ENCODE measurements at regions of chr6 and their contacts with region 1.

Region 1: DNA sequence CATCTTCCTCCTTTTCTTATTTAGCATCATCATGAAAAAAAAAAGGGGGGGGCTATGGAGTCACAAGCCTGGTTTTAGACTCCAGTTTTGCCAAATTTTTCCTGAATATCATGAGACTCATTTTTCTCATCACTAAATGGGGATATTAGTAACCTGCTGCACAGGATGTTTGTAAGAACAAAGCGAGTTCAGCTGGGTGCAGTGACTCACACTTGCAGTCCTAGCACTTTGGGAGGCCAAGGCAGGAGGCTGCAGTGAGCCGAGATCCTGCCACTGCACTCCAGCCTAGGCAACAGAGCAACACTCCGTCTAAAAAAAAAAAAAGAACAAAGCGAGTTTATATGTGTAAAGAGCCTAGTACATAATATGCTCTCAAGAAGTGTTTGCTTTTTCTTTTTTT is 82.8 kb downstream of the TFAP2A start:
- DNase-seq: no peak
- H3K4me3 ChIP-seq: no peak overlapping the region
- H3K4me3 Mint-ChIP-seq: no peak overlapping the region
- H3K27ac Mint-ChIP-seq: no peak overlapping the region
- H3K4me1 ChIP-seq: peaks cover 9% of the 10 kb centered on the region
- H3K4me1 Mint-ChIP-seq: peaks cover 12% of the 10 kb centered on the region
- H3K27me3 ChIP-seq: no peaks in the 10 kb centered on the region
- H3K27me3 Mint-ChIP-seq: no peaks in the 10 kb centered on the region
- CTCF ChIP-seq: no peak

Region 2: GRCh38 chr6:10375391-10375969 is 43.4 kb after region 1 on chr6:
- CTCF ChIA-PET with region 1: no interaction called
- POLR2A ChIA-PET with region 1: interaction called, 10 read pairs
- intact Hi-C with region 1: no loop called
- DNase-seq: no peak
- H3K4me3 ChIP-seq: no peak overlapping the region
- H3K4me3 Mint-ChIP-seq: no peak overlapping the region
- H3K27ac Mint-ChIP-seq: peak overlapping the region; percentile 67
- H3K4me1 ChIP-seq: peaks cover 26% of the 10 kb centered on the region
- H3K4me1 Mint-ChIP-seq: peaks cover 21% of the 10 kb centered on the region
- H3K27me3 ChIP-seq: no peaks in the 10 kb centered on the region
- H3K27me3 Mint-ChIP-seq: no peaks in the 10 kb centered on the region
- CTCF ChIP-seq: no peak

Region 3: DNA sequence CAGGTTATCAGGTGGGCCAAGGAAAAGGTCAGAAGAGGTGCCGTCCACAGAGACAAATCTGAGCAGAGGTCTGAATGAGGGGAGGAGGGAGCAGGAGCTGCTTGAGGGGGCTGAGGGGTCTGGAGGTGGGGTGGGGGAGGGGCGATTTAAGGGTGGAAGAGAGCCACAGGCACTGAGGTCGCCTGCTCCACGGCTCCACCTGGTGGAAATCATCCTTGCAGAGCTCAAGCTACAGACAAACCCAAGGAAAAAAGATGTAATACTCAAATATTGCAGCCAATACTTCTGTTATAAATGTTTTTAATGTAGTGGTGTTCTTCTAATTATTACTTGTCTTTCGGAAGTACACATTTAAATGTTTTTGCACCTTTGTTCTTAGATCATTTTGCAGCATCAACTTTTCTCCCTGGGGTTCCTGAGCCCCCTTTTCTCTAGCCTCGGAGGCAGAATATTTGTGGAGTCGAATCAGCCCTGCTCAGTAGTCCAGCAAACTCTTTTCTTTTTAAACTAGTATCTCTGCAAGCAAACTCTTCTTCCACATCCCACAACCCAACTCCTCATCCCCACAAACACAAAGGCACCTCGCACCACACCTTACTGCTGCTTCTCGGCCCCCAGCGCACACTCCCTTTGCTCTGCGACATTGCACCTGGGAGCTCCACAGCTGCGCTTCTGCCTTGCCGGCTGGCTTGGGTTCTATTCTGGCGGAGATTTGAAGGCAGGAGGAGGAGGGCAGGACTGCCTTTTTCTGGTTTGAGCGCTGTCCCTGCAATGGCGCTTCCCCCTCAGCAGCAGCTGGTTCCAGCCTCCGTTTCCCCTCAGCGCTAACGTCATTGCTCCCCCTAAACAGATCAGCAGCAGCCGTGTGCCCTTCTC is 133.7 kb after region 1 on chr6:
- CTCF ChIA-PET with region 1: no interaction called
- POLR2A ChIA-PET with region 1: no interaction called
- intact Hi-C with region 1: no loop called
- DNase-seq: peak; percentile 65 to 73
- H3K4me3 ChIP-seq: no peak overlapping the region
- H3K4me3 Mint-ChIP-seq: no peak overlapping the region
- H3K27ac Mint-ChIP-seq: no peak overlapping the region
- H3K4me1 ChIP-seq: no peaks in the 10 kb centered on the region
- H3K4me1 Mint-ChIP-seq: no peaks in the 10 kb centered on the region
- H3K27me3 ChIP-seq: no peaks in the 10 kb centered on the region
- H3K27me3 Mint-ChIP-seq: peaks cover 4% of the 10 kb centered on the region
- CTCF ChIP-seq: peak; percentile 50 to 67

Measured in Caco-2 (cell line).